ENCODE measurements at regions of chr3 and their contacts with region 1.

Region 1: GRCh38 chr3:154310840-154311239 is 13.4 kb downstream of the DHX36 start:
- DNase-seq: no peak
- H3K4me3 Mint-ChIP-seq: no peak overlapping the region
- H3K27ac Mint-ChIP-seq: no peak overlapping the region
- H3K4me1 Mint-ChIP-seq: peaks cover 17% of the 10 kb centered on the region
- H3K27me3 Mint-ChIP-seq: no peaks in the 10 kb centered on the region

Region 2: GRCh38 chr3:154275965-154276364 is 34.9 kb before region 1 on chr3:
- intact Hi-C with region 1: loop called (anchors 5 kb)
- DNase-seq: no peak
- H3K4me3 Mint-ChIP-seq: no peak overlapping the region
- H3K27ac Mint-ChIP-seq: no peak overlapping the region
- H3K4me1 Mint-ChIP-seq: no peaks in the 10 kb centered on the region
- H3K27me3 Mint-ChIP-seq: no peaks in the 10 kb centered on the region

Region 3: GRCh38 chr3:154323891-154324738 is 13.3 kb after region 1 on chr3 and contains the start of gene DHX36:
- intact Hi-C with region 1: loop called (anchors 2 kb)
- DNase-seq: peak; percentile 85
- H3K4me3 Mint-ChIP-seq: peak within 1 kb of the TSS; percentile 90
- H3K27ac Mint-ChIP-seq: peak within 1 kb of the TSS; percentile 96
- H3K4me1 Mint-ChIP-seq: peaks cover 28% of the 10 kb centered on the region
- H3K27me3 Mint-ChIP-seq: peaks cover 6% of the 10 kb centered on the region
- total RNA-seq, gene DHX36: 82.1 and 88.5 TPM in 2 replicates

Region 4: GRCh38 chr3:154776549-154777220 is 465.8 kb after region 1 on chr3:
- intact Hi-C with region 1: no loop called
- DNase-seq: no peak
- H3K4me3 Mint-ChIP-seq: no peak overlapping the region
- H3K27ac Mint-ChIP-seq: no peak overlapping the region
- H3K4me1 Mint-ChIP-seq: no peaks in the 10 kb centered on the region
- H3K27me3 Mint-ChIP-seq: no peaks in the 10 kb centered on the region

Region 5: GRCh38 chr3:155110976-155111901 is 800.4 kb after region 1 on chr3:
- intact Hi-C with region 1: no loop called
- DNase-seq: no peak
- H3K4me3 Mint-ChIP-seq: no peak overlapping the region
- H3K27ac Mint-ChIP-seq: no peak overlapping the region
- H3K4me1 Mint-ChIP-seq: peaks cover 5% of the 10 kb centered on the region
- H3K27me3 Mint-ChIP-seq: peaks cover 1% of the 10 kb centered on the region